ENCODE measurements at regions of chr18 and their contacts with region 1.

Region 1: GRCh38 chr18:13831864-13832508 is 8.0 kb downstream of the MC5R start:
- DNase-seq: no peak
- ATAC-seq: peak; percentile 37
- H3K4me3 ChIP-seq: no peak overlapping the region
- H3K27ac ChIP-seq: no peak overlapping the region
- H3K4me1 ChIP-seq: no peaks in the 10 kb centered on the region
- H3K27me3 ChIP-seq: peaks cover 0 to 68% of the 10 kb centered on the region in 2 donors
- CTCF ChIP-seq: no peak

Region 2: GRCh38 chr18:13893418-13893760 is 61.4 kb after region 1 on chr18:
- intact Hi-C with region 1: loop called in 1 of 2 experiments (anchors 10 kb)
- DNase-seq: no peak
- ATAC-seq: no peak
- H3K4me3 ChIP-seq: no peak overlapping the region
- H3K27ac ChIP-seq: no peak overlapping the region
- H3K4me1 ChIP-seq: no peaks in the 10 kb centered on the region
- H3K27me3 ChIP-seq: peaks cover 0 to 4% of the 10 kb centered on the region in 2 donors
- CTCF ChIP-seq: no peak

Region 3: DNA sequence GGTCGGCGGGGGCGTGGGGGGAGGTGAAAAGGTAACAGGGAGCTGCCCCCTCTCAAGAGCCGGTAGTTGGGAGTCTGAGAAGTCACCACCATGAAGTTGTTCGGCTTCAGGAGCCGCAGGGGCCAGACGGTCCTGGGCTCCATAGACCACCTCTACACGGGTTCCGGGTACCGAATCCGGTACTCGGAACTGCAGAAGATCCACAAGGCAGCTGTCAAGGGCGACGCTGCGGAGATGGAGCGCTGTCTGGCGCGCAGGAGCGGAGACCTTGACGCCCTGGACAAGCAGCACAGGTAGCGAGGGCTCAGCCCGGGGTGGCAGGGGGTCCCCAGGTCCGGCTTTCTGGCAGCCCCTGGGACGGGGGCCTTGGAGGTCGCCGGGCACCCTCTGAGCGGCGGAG is 347.3 kb after region 1 on chr18:
- intact Hi-C with region 1: no loop called
- DNase-seq: no peak
- ATAC-seq: peak; percentile 8
- H3K4me3 ChIP-seq: peak overlapping the region; percentile 33 to 41
- H3K27ac ChIP-seq: no peak overlapping the region
- H3K4me1 ChIP-seq: no peaks in the 10 kb centered on the region
- H3K27me3 ChIP-seq: peaks cover 0 to 6% of the 10 kb centered on the region in 2 donors
- CTCF ChIP-seq: no peak